Spleen (tissue), 13 donors: ENCODE measurements at regions of chr20 and their contacts with region 1.

Region 1: GRCh38 chr20:45771182-45771759 is 20.4 kb downstream of the WFDC3 start:
- DNase-seq: peak; percentile 89
- H3K4me3 ChIP-seq: no peak overlapping the region
- H3K27ac ChIP-seq: no peak overlapping the region
- H3K4me1 ChIP-seq: peaks cover 0 to 8% (median 4%) of the 10 kb centered on the region in 6 donors
- H3K27me3 ChIP-seq: peaks cover 0 to 5% (median 0%) of the 10 kb centered on the region in 7 donors
- CTCF ChIP-seq: peak; percentile 85 to 95 (median 93)
- POLR2A ChIP-seq: no peak

Region 2: DNA sequence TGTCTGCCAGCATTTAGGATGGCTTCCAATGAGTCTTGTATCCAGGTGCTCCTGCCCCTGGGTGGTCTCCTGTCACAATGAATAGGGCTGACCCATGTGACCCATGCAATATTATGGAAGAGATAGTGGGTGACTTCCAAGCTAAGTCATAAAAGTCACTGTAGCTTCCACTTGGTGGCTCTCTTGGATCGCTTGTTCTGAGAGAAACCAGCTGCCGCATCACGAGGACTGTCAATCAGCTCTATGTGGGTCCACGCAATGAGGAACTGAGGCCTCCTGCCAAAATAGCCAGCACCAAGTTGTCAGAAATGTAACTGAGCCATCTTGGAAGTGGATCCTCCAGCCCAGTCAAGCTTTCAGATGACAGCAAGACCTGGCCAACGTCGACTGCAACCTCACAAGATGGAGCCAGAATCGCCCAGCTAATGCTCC is 448.3 kb before region 1 on chr20:
- intact Hi-C with region 1: loop called (anchors 5 kb)
- DNase-seq: no peak
- H3K4me3 ChIP-seq: no peak overlapping the region
- H3K27ac ChIP-seq: no peak overlapping the region
- H3K4me1 ChIP-seq: peaks cover 3 to 45% (median 30%) of the 10 kb centered on the region in 6 donors
- H3K27me3 ChIP-seq: no peaks in the 10 kb centered on the region
- CTCF ChIP-seq: peak in 4 of 11 experiments; percentile 21 to 42 (median 38)
- POLR2A ChIP-seq: no peak

Region 3: DNA sequence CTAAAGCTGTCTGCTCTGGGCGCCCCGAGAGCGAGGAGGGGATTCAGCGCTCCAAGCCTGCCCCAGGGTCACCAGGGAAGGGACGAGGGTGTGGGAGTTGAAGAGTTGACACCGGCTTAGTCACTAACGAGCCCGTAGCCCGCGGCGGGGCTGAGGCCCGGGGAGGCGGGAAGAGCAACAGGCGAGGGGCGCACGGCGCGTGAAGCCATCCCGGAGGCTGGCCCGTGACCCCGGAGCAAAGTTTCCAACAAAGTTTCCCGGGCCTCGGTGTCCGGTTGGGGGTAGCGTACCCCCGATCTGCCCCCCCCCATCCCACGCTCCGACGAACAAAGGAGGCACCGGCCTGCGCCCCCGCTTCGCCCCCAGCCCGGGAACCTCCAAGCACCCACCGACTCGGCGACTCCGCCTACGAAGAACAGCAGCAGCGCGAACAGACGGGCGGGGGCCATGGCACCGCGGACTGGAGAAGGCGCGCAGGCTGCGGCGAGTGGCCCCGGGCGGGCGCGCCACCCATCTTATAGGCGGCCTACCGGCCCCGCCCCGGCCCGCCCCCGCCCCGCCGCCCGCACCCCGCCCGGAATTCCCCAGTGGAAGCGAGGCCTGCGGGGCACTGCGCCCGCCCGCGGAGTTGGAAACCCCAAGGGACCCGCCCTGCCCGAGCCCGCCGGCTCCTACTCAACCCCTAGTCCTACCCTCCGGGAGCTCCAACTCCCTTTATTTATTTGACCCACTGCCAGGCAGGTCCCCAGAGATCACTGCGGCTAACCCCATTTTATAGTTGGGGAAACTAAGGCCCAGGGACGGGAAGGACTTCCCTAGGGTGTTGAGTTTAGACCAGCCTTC is 423.1 kb before region 1 on chr20 and contains the start of gene SDC4:
- intact Hi-C with region 1: no loop called
- DNase-seq: peak; percentile 83
- H3K4me3 ChIP-seq: peak within 1 kb of the TSS; percentile 29 to 82 (median 42)
- H3K27ac ChIP-seq: peak within 1 kb of the TSS; percentile 42 to 86 (median 76)
- H3K4me1 ChIP-seq: peaks cover 0 to 57% (median 32%) of the 10 kb centered on the region in 6 donors
- H3K27me3 ChIP-seq: peaks cover 0 to 25% (median 2%) of the 10 kb centered on the region in 7 donors
- CTCF ChIP-seq: no peak
- POLR2A ChIP-seq: peak in 1 of 3 donors; percentile 51
- total RNA-seq, gene SDC4: 27.2 to 56.1 (median 39.7) TPM

Region 4: DNA sequence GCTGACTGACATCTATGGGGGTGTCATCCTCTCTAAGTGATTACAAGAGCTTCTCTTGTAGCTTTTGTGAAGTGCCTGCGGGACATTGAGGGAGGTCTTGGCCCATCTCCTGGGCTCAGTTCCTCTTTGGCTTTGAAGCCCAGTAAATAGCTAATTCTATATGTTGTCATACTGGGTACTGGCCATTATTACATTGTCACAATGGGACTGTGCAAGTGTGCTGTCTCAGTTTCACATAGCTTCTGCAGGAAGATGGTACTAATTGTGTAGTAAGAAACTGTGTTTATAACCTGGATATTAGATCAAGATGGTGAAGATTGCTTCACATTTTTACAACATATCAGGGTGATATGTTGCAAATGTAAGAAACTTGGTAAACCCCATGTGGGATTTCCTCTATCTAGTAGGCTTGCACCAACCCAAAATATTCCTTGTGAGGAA is 275.8 kb before region 1 on chr20:
- intact Hi-C with region 1: no loop called
- DNase-seq: no peak
- H3K4me3 ChIP-seq: no peak overlapping the region
- H3K27ac ChIP-seq: peak overlapping the region in 1 of 8 donors; percentile 22
- H3K4me1 ChIP-seq: no peaks in the 10 kb centered on the region
- H3K27me3 ChIP-seq: peaks cover 0 to 42% (median 0%) of the 10 kb centered on the region in 7 donors
- CTCF ChIP-seq: no peak
- POLR2A ChIP-seq: no peak

Region 5: GRCh38 chr20:45545754-45546453 is 225.4 kb before region 1 on chr20:
- intact Hi-C with region 1: loop called (anchors 10 kb)
- DNase-seq: no peak
- H3K4me3 ChIP-seq: no peak overlapping the region
- H3K27ac ChIP-seq: no peak overlapping the region
- H3K4me1 ChIP-seq: no peaks in the 10 kb centered on the region
- H3K27me3 ChIP-seq: peaks cover 0 to 27% (median 0%) of the 10 kb centered on the region in 7 donors
- CTCF ChIP-seq: peak in 2 of 11 experiments; percentile 28 to 42
- POLR2A ChIP-seq: no peak

Region 6: DNA sequence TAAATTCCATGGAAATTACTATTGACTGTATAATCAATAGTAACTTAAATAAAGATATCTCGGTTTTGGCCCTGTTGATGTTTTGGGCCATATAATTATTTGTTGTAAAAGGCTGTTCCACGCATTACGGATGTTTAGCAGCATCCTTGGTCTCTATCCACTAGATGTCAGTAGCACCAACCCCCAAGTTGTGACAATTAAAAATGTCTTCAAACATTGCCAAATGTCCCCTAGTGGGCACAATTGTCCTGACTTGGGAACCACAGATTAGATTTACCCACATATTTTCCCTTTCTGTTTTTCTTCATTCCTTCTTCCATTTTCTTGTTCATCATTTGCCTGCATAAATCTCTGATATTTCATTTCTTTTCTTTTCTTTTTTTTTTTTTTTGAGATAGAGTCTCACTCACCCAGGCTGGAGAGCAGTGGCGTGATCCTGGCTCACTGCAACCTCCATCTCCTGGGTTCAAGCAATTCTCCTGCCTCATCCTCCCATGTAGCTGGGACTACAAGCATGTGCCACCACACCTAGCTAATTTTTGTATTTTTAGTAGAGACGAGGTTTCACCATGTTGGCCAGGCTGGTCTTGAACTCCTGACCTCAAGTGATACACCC is 178.6 kb before region 1 on chr20:
- intact Hi-C with region 1: loop called (anchors 10 kb)
- DNase-seq: no peak
- H3K4me3 ChIP-seq: no peak overlapping the region
- H3K27ac ChIP-seq: no peak overlapping the region
- H3K4me1 ChIP-seq: no peaks in the 10 kb centered on the region
- H3K27me3 ChIP-seq: peaks cover 0 to 26% (median 0%) of the 10 kb centered on the region in 7 donors
- CTCF ChIP-seq: peak in 10 of 11 experiments; percentile 31 to 66 (median 48)
- POLR2A ChIP-seq: no peak